Activated CD4-positive, alpha-beta T cell treated with anti-CD3 and anti-CD28 coated beads, Interleukin-2, amount 10 ng/mL, durations not matched to agents 7 days and 5 days (primary cell): ENCODE measurements at regions of chr14 and their contacts with region 1.

Region 1: GRCh38 chr14:104094709-104095438 is 9.4 kb downstream of the ASPG start:
- DNase-seq: peak; percentile 74
- H3K4me3 Mint-ChIP-seq: no peak overlapping the region
- H3K27ac Mint-ChIP-seq: no peak overlapping the region
- H3K4me1 Mint-ChIP-seq: peaks cover 3% of the 10 kb centered on the region
- H3K27me3 Mint-ChIP-seq: no peaks in the 10 kb centered on the region

Region 2: GRCh38 chr14:104078031-104078455 is 16.8 kb before region 1 on chr14:
- CTCF ChIA-PET with region 1: interaction called, 16 read pairs
- POLR2A ChIA-PET with region 1: no interaction called
- DNase-seq: peak; percentile 89
- H3K4me3 Mint-ChIP-seq: no peak overlapping the region
- H3K27ac Mint-ChIP-seq: peak overlapping the region; percentile 6
- H3K4me1 Mint-ChIP-seq: peaks cover 13% of the 10 kb centered on the region
- H3K27me3 Mint-ChIP-seq: peaks cover 3% of the 10 kb centered on the region